ENCODE measurements at regions of chr6 and their contacts with region 1.

Region 1: GRCh38 chr6:133568970-133569889 is 319.7 kb upstream of the TCF21 start:
- DNase-seq: peak; percentile 58
- H3K4me3 ChIP-seq: peak overlapping the region; percentile 41
- H3K27ac ChIP-seq: peak overlapping the region; percentile 71
- H3K27me3 ChIP-seq: no peaks in the 10 kb centered on the region
- CTCF ChIP-seq: peak; percentile 98

Region 2: DNA sequence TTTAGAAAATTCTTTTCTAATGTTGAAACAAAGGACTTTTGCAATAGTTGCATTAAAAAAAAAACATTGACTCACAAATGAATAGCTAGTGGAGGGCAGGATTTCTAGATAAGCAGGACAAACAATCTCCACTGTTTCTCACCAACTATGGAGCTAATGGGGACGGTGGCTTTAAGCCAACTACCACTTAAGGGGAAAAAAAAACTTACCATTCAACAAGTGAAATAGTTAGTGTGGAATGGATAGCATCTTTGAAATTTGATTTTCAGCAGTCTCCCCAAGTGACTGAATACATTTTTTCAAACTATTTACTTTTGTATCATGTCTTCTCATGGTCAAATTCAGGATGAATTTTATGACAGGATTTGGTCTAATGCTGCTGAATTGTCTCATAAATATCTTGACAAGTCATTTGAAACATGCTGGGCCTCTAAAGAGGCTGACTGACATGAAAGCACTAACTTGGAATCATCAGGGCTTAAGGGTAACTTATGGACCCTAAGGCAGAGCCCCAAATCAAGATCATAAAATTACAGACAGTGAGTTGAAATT is 227.5 kb before region 1 on chr6:
- CTCF ChIA-PET with region 1: no interaction called
- POLR2A ChIA-PET with region 1: no interaction called
- DNase-seq: peak; percentile 15
- H3K4me3 ChIP-seq: no peak overlapping the region
- H3K27ac ChIP-seq: no peak overlapping the region
- H3K27me3 ChIP-seq: no peaks in the 10 kb centered on the region
- CTCF ChIP-seq: no peak

Region 3: DNA sequence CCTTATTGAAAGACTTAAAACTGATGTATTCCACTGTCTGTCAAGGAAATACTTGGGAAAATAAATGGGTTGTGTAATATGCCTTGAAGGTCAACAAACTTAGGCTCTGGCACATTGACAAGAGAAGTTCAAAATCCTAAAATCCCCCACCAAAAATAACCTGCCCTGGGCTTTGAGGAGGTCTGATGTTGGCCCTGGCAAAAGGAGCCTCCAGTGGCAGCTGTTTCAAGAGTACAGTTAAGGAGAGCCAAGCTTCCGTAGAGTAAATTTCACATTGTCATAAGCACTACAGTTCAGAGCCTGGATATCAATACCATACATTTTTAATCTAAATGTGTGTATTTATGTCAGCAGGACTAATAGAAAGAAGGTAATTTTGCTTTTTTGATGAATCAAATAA is 45.4 kb before region 1 on chr6:
- CTCF ChIA-PET with region 1: no interaction called
- POLR2A ChIA-PET with region 1: no interaction called
- DNase-seq: no peak
- H3K4me3 ChIP-seq: no peak overlapping the region
- H3K27ac ChIP-seq: no peak overlapping the region
- H3K27me3 ChIP-seq: no peaks in the 10 kb centered on the region
- CTCF ChIP-seq: no peak

Region 4: GRCh38 chr6:133587546-133588160 is 18.4 kb after region 1 on chr6:
- CTCF ChIA-PET with region 1: interaction called, 24 read pairs
- POLR2A ChIA-PET with region 1: interaction called, 4 read pairs
- DNase-seq: peak; percentile 70
- H3K4me3 ChIP-seq: no peak overlapping the region
- H3K27ac ChIP-seq: no peak overlapping the region
- H3K27me3 ChIP-seq: no peaks in the 10 kb centered on the region
- CTCF ChIP-seq: no peak

Region 5: DNA sequence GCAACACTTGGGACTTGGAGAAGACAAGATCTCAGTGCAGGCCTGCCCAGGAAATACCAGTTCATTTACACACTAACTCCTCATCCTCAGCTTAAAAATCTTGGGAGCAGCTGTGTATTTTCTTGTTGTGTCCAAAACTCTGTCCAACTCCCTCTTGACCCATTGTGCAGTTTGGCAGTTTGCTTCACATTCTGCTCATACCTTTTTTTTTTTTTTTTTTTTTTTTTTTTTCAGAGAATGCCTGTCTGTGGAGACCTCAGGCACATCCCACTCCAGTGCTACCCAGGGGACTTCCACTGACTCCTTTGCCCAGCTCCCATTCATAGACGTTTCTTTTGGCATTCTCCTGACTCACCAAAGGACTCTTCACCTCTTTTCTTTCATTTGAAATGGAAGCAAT is 53.8 kb after region 1 on chr6:
- CTCF ChIA-PET with region 1: interaction called, 5 read pairs
- POLR2A ChIA-PET with region 1: interaction called, 14 read pairs
- DNase-seq: no peak
- H3K4me3 ChIP-seq: no peak overlapping the region
- H3K27ac ChIP-seq: no peak overlapping the region
- H3K27me3 ChIP-seq: no peaks in the 10 kb centered on the region
- CTCF ChIP-seq: no peak

Region 6: GRCh38 chr6:133644892-133645619 is 75.8 kb after region 1 on chr6:
- CTCF ChIA-PET with region 1: interaction called, 22 read pairs
- POLR2A ChIA-PET with region 1: interaction called, 17 read pairs
- DNase-seq: peak; percentile 78
- H3K4me3 ChIP-seq: no peak overlapping the region
- H3K27ac ChIP-seq: no peak overlapping the region
- H3K27me3 ChIP-seq: no peaks in the 10 kb centered on the region
- CTCF ChIP-seq: no peak

Region 7: GRCh38 chr6:133891149-133891926 is 322.1 kb after region 1 on chr6:
- CTCF ChIA-PET with region 1: interaction called, 36 read pairs
- POLR2A ChIA-PET with region 1: interaction called, 9 read pairs
- DNase-seq: no peak
- H3K4me3 ChIP-seq: peak overlapping the region; percentile 98
- H3K27ac ChIP-seq: peak overlapping the region; percentile 75
- H3K27me3 ChIP-seq: no peaks in the 10 kb centered on the region
- CTCF ChIP-seq: 0 out of 2 replicates have a peak, but pooled peaks have one; percentile 9

Region 8: DNA sequence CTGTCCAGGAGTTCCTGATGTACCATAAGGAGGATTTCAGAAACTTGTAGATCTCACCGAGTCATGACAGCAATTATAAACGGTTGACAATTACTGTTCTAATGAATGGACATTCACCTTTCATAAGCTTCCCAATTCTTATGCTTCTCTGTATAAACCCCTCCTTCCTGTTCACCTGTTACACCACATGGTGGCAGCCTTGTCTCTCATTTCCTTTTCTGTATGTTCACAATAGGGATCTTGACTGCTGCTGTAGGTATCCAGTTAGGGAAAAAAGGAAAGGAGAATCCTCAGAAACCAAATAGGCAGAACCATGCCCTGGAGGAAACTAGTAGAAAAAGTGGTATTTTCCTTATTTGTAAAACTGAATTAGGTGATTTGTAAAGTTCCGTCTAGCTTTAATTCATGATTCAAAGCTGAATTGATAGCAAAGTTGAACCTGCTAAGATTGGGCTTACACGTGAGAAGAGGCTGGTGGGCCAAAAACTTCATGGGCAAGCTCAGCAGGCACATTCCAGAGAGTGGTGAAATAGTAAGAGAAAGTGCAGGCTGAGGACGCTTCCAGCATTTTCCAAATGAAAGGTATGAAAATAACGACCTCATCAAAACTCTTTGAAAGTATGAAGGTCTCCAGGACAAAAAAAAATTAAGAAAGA is 354.8 kb after region 1 on chr6:
- CTCF ChIA-PET with region 1: interaction called, 43 read pairs
- POLR2A ChIA-PET with region 1: no interaction called
- DNase-seq: peak; percentile 59
- H3K4me3 ChIP-seq: no peak overlapping the region
- H3K27ac ChIP-seq: no peak overlapping the region
- H3K27me3 ChIP-seq: no peaks in the 10 kb centered on the region
- CTCF ChIP-seq: peak; percentile 88

Measured in AG04450 (cell line).